Tibial artery (tissue), 4 donors: ENCODE measurements at regions of chr6 and their contacts with region 1.

Region 1: DNA sequence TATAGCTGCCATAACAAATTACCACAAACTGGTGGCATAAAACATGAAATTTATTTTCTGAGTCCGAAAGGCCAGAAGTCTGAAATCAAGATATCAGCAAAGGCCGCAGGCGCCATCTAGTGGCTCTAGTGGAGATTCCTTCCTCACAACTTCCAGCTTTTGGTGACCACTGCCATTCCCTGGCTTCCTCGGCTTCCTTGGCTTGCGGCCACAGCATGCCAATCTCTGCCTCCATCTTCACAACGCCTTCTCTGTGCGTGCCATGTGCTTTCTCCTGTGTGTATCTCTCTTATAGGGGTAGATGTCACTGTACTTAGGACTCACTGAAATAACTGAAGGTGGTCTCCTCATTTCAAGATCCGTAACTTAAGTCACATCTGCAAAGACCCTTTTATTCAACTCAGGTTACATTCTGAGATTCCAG is 5.4 kb upstream of the PLAGL1 start:
- DNase-seq: peak; percentile 57 to 81
- H3K4me3 ChIP-seq: no peak overlapping the region
- H3K27ac ChIP-seq: no peak overlapping the region
- H3K4me1 ChIP-seq: no peaks in the 10 kb centered on the region
- H3K27me3 ChIP-seq: no peaks in the 10 kb centered on the region
- CTCF ChIP-seq: peak; percentile 90 to 95

Region 2: GRCh38 chr6:143940011-143940597 is 73.4 kb before region 1 on chr6:
- intact Hi-C with region 1: loop called (anchors 2 kb)
- DNase-seq: no peak
- H3K4me3 ChIP-seq: no peak overlapping the region
- H3K27ac ChIP-seq: no peak overlapping the region
- H3K4me1 ChIP-seq: no peaks in the 10 kb centered on the region
- H3K27me3 ChIP-seq: no peaks in the 10 kb centered on the region
- CTCF ChIP-seq: peak; percentile 44 to 56

Region 3: DNA sequence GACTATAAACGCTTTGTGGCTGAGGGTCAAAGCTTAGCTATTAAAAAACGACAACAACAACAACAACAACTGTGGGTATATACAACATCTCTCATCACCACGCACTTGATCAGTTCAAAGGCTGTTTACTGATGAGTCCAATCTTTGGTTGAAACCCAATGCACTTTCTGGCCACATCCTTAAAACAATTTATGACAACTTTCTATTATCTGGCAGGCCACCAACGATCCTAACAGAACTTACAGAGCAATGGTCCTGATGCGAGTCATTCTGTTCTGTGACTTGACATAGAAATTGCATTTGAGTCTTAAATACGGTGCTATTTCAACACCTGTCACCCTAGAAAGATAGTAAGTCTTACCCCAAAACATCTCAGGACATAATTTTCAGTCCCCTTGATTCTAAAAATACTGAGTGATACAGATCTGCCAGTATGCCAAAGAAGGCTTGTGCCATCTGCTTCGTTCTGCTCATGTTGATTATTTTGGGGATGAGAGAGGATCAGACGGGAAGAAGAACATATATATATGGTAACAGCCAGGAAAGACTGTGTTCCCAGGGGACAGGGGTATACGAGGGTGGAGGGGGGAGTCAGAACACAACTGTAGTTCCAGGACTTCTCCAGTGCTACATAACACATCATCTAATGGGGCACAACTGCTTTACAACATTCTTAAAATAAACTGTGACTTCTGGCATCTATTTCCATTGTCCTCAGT is 61.3 kb before region 1 on chr6:
- intact Hi-C with region 1: no loop called
- DNase-seq: no peak
- H3K4me3 ChIP-seq: no peak overlapping the region
- H3K27ac ChIP-seq: no peak overlapping the region
- H3K4me1 ChIP-seq: no peaks in the 10 kb centered on the region
- H3K27me3 ChIP-seq: no peaks in the 10 kb centered on the region
- CTCF ChIP-seq: no peak